Uterus (tissue), 4 donors: ENCODE measurements at regions of chr9 and their contacts with region 1.

Region 1: GRCh38 chr9:96217754-96218693 is 84.0 kb downstream of the HSD17B3 start:
- DNase-seq: peak; percentile 48 to 71
- H3K4me3 ChIP-seq: peak overlapping the region in 1 of 2 donors; percentile 30
- H3K27ac ChIP-seq: peak overlapping the region; percentile 44 to 59
- H3K4me1 ChIP-seq: no peaks in the 10 kb centered on the region
- H3K27me3 ChIP-seq: no peaks in the 10 kb centered on the region
- CTCF ChIP-seq: peak; percentile 87 to 96 (median 92)
- POLR2A ChIP-seq: peak in 1 of 2 donors; percentile 19

Region 2: GRCh38 chr9:95327239-95327865 is 890.7 kb before region 1 on chr9:
- intact Hi-C with region 1: no loop called
- DNase-seq: no peak
- H3K4me3 ChIP-seq: no peak overlapping the region
- H3K27ac ChIP-seq: no peak overlapping the region
- H3K4me1 ChIP-seq: no peaks in the 10 kb centered on the region
- H3K27me3 ChIP-seq: no peaks in the 10 kb centered on the region
- CTCF ChIP-seq: no peak
- POLR2A ChIP-seq: no peak

Region 3: DNA sequence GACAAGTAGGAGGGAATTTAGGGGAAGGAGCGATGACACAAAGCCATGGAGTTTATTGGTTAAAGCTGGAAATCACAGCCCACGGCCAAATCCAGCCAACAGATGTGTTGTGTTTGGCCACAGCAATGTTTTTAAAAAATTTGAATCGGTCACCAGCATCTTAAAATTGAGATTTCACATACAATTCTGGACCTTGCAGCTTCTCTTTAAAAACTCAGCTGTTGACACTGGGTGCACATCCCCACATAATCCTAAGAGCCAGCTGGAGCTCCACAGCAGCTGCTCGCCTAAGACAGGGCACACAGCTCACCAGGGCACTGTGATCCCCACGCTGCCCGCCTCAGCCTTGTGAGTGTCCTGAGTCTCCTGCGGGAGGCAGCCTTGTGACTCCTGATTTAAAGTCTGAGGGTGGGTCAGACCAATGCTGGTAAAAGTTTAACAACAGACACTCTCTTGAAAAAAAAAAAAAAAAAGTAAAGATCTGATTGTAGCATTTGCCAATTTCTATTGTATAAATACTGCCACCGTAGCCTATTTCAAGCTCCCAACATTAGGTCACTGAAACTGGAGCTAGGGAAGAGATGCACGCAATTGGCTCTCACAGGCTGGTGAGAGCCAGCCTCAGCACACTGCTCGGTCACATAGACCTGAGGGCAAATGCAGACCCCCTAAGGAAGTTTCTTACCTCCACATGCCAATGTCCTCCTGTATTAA is 40.9 kb before region 1 on chr9:
- intact Hi-C with region 1: no loop called
- DNase-seq: no peak
- H3K4me3 ChIP-seq: no peak overlapping the region
- H3K27ac ChIP-seq: no peak overlapping the region
- H3K4me1 ChIP-seq: no peaks in the 10 kb centered on the region
- H3K27me3 ChIP-seq: no peaks in the 10 kb centered on the region
- CTCF ChIP-seq: no peak
- POLR2A ChIP-seq: no peak

Region 4: GRCh38 chr9:96270236-96270744 is 52.3 kb after region 1 on chr9:
- intact Hi-C with region 1: no loop called
- DNase-seq: no peak
- H3K4me3 ChIP-seq: no peak overlapping the region
- H3K27ac ChIP-seq: no peak overlapping the region
- H3K4me1 ChIP-seq: no peaks in the 10 kb centered on the region
- H3K27me3 ChIP-seq: no peaks in the 10 kb centered on the region
- CTCF ChIP-seq: no peak
- POLR2A ChIP-seq: no peak

Region 5: GRCh38 chr9:96317335-96317980 is 99.4 kb after region 1 on chr9:
- intact Hi-C with region 1: loop called (anchors 10 kb)
- DNase-seq: peak in 1 of 2 donors; percentile 36
- H3K4me3 ChIP-seq: no peak overlapping the region
- H3K27ac ChIP-seq: no peak overlapping the region
- H3K4me1 ChIP-seq: no peaks in the 10 kb centered on the region
- H3K27me3 ChIP-seq: no peaks in the 10 kb centered on the region
- CTCF ChIP-seq: peak; percentile 67 to 79 (median 72)
- POLR2A ChIP-seq: no peak